ENCODE measurements at regions of chr7 and their contacts with region 1.

Region 1: DNA sequence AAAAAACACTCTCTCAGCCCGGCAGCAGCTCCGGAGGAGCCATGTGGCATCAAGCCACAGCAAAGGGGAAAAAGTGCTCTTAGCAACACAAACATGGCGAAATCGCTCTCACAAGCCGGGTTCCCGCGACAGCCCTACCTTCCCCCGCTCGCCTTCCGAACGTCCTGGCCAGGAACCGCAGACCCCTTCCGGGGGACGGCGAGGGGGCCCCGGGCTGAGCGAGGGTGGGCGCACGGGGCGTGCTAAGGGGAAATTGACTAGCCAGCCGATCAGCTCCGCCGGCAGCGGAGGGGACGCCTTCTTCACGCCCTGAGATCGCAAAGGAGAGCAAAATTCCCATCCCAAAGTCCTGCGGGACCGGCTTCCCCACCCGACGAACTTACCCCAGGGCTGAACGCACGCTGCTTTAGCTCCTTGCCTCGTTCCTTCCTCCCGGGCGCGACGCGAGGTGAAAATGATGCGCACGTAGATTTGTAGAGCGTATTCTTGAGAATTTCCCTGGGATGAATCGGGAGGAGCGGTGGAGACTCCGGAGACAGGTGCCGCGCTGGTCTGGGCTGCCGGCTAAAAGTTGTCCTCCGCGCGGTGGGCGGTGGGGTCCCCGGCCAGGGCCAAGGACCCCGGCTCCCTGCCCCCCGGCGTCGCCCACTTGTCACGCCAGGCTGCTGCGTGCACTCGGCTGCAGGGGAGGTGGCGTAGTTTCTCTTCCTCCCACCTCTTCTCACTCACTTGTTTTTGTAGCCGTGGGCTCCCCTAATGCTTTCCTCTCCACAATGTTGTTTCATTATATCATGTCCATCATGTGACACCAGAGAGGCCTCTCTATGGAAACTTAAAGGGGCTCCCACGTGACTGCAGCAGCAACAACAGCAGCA is 220.1 kb upstream of the MKLN1 start:
- DNase-seq: peak; percentile 64
- ATAC-seq: peak; percentile 8
- H3K4me3 ChIP-seq: peak overlapping the region; percentile 96
- H3K27ac ChIP-seq: peak overlapping the region; percentile 96
- H3K4me1 ChIP-seq: peaks cover 38% of the 10 kb centered on the region
- H3K27me3 ChIP-seq: no peaks in the 10 kb centered on the region
- CTCF ChIP-seq: no peak

Region 2: GRCh38 chr7:131145026-131145425 is 37.5 kb after region 1 on chr7:
- CTCF ChIA-PET with region 1: no interaction called
- POLR2A ChIA-PET with region 1: interaction called, 8 read pairs
- intact Hi-C with region 1: loop called (anchors 1 kb)
- DNase-seq: peak; percentile 87
- ATAC-seq: peak; percentile 93
- H3K4me3 ChIP-seq: peak overlapping the region; percentile 39; the same call in 1 of the 2 replicates
- H3K27ac ChIP-seq: peak overlapping the region; percentile 97
- H3K4me1 ChIP-seq: peaks cover 17% of the 10 kb centered on the region
- H3K27me3 ChIP-seq: no peaks in the 10 kb centered on the region
- CTCF ChIP-seq: no peak

Region 3: GRCh38 chr7:131188367-131189339 is 81.1 kb after region 1 on chr7:
- CTCF ChIA-PET with region 1: no interaction called
- POLR2A ChIA-PET with region 1: interaction called, 7 read pairs
- intact Hi-C with region 1: loop called (anchors 1 kb)
- DNase-seq: peak; percentile 96
- ATAC-seq: peak; percentile 76
- H3K4me3 ChIP-seq: 0 out of 2 replicates have a peak overlapping the region, but pooled peaks have one; percentile 6
- H3K27ac ChIP-seq: peak overlapping the region; percentile 93
- H3K4me1 ChIP-seq: peaks cover 51% of the 10 kb centered on the region
- H3K27me3 ChIP-seq: no peaks in the 10 kb centered on the region
- CTCF ChIP-seq: no peak

Region 4: GRCh38 chr7:131302876-131303707 is 195.5 kb after region 1 on chr7:
- CTCF ChIA-PET with region 1: interaction called, 6 read pairs
- POLR2A ChIA-PET with region 1: no interaction called
- intact Hi-C with region 1: loop called (anchors 1 kb)
- DNase-seq: peak; percentile 65
- ATAC-seq: peak; percentile 88
- H3K4me3 ChIP-seq: no peak overlapping the region
- H3K27ac ChIP-seq: no peak overlapping the region
- H3K4me1 ChIP-seq: no peaks in the 10 kb centered on the region
- H3K27me3 ChIP-seq: no peaks in the 10 kb centered on the region
- CTCF ChIP-seq: peak; percentile 84

Region 5: DNA sequence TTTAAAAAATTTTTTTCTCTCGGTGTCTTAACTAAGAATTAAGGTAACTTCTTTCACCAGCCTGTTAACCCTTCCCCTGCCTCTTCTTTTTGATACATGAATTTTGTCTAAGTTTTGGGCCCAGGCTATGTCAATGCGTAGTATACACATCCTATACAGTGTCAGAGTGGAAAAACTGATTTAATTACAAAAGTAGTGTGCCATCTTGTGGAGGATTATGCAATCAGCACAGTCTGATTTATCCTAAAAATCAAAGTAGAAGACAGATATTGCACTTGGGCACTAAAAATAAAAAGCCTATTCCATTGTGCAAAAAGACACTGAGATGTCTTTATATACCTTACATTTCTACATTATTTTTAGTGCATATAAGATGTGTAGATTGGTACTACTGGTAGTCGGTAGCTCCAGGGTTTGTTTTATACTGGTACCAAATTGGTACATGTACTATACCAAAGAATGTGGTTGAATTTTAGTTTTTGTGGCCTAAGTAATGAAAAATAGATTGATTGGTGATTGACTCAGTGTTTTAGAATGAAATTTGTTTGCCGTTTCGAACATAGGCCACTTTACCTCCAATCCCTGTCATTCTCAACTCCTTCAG is 316.7 kb after region 1 on chr7:
- CTCF ChIA-PET with region 1: interaction called, 3 read pairs
- POLR2A ChIA-PET with region 1: no interaction called
- intact Hi-C with region 1: loop called (anchors 1 kb)
- DNase-seq: peak; percentile 57
- ATAC-seq: peak; percentile 96
- H3K4me3 ChIP-seq: no peak overlapping the region
- H3K27ac ChIP-seq: no peak overlapping the region
- H3K4me1 ChIP-seq: no peaks in the 10 kb centered on the region
- H3K27me3 ChIP-seq: no peaks in the 10 kb centered on the region
- CTCF ChIP-seq: peak; percentile 78

Measured in PC-3 (cell line).